IMR-90 (cell line): ENCODE measurements at regions of chr11 and their contacts with region 1.

Region 1: DNA sequence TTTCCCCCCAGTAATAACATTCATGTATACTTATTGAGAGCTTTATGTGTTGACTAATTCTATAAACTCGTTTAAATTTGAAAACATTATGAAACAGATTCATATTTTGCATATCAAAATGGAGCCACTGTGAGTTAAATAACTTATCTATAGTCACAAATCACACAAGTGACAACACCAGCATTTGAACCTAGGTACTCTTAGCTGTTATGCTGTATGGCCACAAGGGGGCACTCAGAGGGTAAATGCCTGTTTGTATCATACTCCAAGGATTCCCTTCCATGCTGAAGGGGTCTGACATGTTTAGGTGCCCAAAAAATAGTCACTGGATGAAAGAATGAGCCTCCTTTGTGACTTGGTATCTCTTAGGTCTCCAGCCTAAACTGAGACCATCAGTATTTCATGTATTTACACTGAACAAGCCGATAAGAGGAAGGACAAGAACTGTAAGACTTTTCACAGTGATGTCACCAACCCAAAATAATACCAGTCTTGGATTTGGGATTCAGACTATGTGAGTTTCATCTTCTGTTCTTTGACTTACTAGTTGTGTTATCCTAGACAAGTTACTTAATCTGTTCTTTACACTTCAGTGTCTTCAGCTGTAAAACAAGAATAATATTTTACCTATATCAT is 12.2 kb upstream of the OR52D1 start:
- DNase-seq: peak; percentile 57
- ATAC-seq: peak; percentile 95
- H3K4me3 ChIP-seq: no peak overlapping the region
- H3K27ac ChIP-seq: no peak overlapping the region
- H3K4me1 ChIP-seq: no peaks in the 10 kb centered on the region
- H3K27me3 ChIP-seq: peaks cover 4% of the 10 kb centered on the region
- CTCF ChIP-seq: peak; percentile 75
- POLR2A ChIP-seq: no peak
- RAD21 ChIP-seq: peak; percentile 77

Region 2: GRCh38 chr11:5123802-5124521 is 352.3 kb before region 1 on chr11:
- CTCF ChIA-PET with region 1: no interaction called
- POLR2A ChIA-PET with region 1: no interaction called
- dilution Hi-C with region 1: no loop called
- in situ Hi-C with region 1: no loop called
- intact Hi-C with region 1: loop called (anchors 1 kb)
- DNase-seq: peak; percentile 76
- ATAC-seq: peak; percentile 100
- H3K4me3 ChIP-seq: no peak overlapping the region
- H3K27ac ChIP-seq: no peak overlapping the region
- H3K4me1 ChIP-seq: no peaks in the 10 kb centered on the region
- H3K27me3 ChIP-seq: no peaks in the 10 kb centered on the region
- CTCF ChIP-seq: peak; percentile 94
- POLR2A ChIP-seq: no peak
- RAD21 ChIP-seq: peak; percentile 91

Region 3: DNA sequence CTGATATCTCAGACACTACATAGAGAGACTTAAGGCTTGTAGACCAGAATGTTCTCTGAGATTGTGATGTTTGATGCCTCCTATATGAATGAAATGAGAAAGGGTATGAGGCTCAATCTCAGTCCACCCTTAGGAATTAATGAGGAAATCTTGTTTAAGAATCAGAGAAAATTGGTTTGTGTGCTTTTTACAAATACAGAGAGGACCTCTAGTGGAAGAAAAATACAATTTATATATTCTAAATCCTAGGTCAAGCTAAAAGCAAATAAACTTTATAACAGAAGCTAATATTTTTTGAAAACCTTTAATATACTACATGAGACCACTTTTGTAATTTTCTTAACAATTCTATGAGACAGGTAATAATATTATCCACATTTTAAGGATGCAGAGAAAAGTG is 77.0 kb after region 1 on chr11:
- CTCF ChIA-PET with region 1: interaction called, 7 read pairs
- POLR2A ChIA-PET with region 1: no interaction called
- dilution Hi-C with region 1: no loop called
- in situ Hi-C with region 1: no loop called
- intact Hi-C with region 1: loop called (anchors 1 kb)
- DNase-seq: peak; percentile 10
- ATAC-seq: no peak; the same call in 1 of the 2 replicates
- H3K4me3 ChIP-seq: no peak overlapping the region
- H3K27ac ChIP-seq: no peak overlapping the region
- H3K4me1 ChIP-seq: no peaks in the 10 kb centered on the region
- H3K27me3 ChIP-seq: no peaks in the 10 kb centered on the region; the same call in 1 of the 2 replicates
- CTCF ChIP-seq: peak; percentile 38; the same call in 1 of the 2 replicates
- POLR2A ChIP-seq: no peak
- RAD21 ChIP-seq: peak; percentile 37

Region 4: GRCh38 chr11:5684646-5685362 is 208.5 kb after region 1 on chr11 and contains the start of gene TRIM5:
- CTCF ChIA-PET with region 1: no interaction called
- POLR2A ChIA-PET with region 1: no interaction called
- dilution Hi-C with region 1: no loop called
- in situ Hi-C with region 1: no loop called
- intact Hi-C with region 1: loop called (anchors 1 kb)
- DNase-seq: peak; percentile 99
- ATAC-seq: peak; percentile 95
- H3K4me3 ChIP-seq: peak within 1 kb of the TSS; percentile 56
- H3K27ac ChIP-seq: peak within 1 kb of the TSS; percentile 67
- H3K4me1 ChIP-seq: no peaks in the 10 kb centered on the region
- H3K27me3 ChIP-seq: no peaks in the 10 kb centered on the region
- CTCF ChIP-seq: peak; percentile 58
- POLR2A ChIP-seq: peak; percentile 95
- RAD21 ChIP-seq: peak; percentile 46
- total RNA-seq, gene TRIM5: 49.1 and 58.0 TPM in 2 replicates

Region 5: GRCh38 chr11:5712507-5712906 is 236.2 kb after region 1 on chr11:
- CTCF ChIA-PET with region 1: no interaction called
- POLR2A ChIA-PET with region 1: no interaction called
- dilution Hi-C with region 1: no loop called
- in situ Hi-C with region 1: no loop called
- intact Hi-C with region 1: loop called (anchors 5 kb)
- DNase-seq: peak; percentile 5
- ATAC-seq: no peak
- H3K4me3 ChIP-seq: no peak overlapping the region
- H3K27ac ChIP-seq: no peak overlapping the region
- H3K4me1 ChIP-seq: no peaks in the 10 kb centered on the region
- H3K27me3 ChIP-seq: no peaks in the 10 kb centered on the region
- CTCF ChIP-seq: peak; percentile 40
- POLR2A ChIP-seq: no peak
- RAD21 ChIP-seq: peak; percentile 38

Region 6: DNA sequence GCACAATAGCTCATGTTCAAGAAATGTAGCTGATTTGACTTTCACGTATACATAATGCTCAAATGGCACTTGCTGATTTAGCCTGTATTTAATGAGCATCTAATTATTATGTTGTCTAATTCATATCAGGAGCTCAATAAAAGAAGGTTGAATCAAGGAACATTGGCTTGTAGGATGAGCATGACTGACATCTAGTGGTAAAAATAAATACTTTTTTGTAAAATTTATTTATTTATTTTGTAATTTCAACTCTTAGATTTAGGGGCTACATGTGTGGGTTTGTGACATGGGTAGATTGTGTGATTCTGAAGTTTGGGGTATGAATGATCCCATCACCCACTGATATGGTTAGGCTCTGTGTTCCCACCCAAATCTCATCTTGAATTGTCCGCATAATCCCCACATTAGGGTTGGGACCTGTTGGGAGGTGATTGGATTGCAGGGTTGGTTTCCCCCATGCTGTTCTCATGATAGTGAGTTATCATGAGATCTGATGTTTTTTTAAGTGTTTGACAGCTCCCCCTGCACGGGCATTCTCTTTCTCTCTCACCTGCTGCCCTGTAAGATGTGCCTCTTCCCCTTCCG is 415.0 kb after region 1 on chr11:
- CTCF ChIA-PET with region 1: no interaction called
- POLR2A ChIA-PET with region 1: no interaction called
- dilution Hi-C with region 1: no loop called
- in situ Hi-C with region 1: no loop called
- intact Hi-C with region 1: loop called (anchors 10 kb)
- DNase-seq: peak; percentile 6
- ATAC-seq: no peak
- H3K4me3 ChIP-seq: no peak overlapping the region
- H3K27ac ChIP-seq: no peak overlapping the region
- H3K4me1 ChIP-seq: no peaks in the 10 kb centered on the region
- H3K27me3 ChIP-seq: no peaks in the 10 kb centered on the region
- CTCF ChIP-seq: peak; percentile 44
- POLR2A ChIP-seq: no peak
- RAD21 ChIP-seq: peak; percentile 33; the same call in 1 of the 2 replicates

Region 7: DNA sequence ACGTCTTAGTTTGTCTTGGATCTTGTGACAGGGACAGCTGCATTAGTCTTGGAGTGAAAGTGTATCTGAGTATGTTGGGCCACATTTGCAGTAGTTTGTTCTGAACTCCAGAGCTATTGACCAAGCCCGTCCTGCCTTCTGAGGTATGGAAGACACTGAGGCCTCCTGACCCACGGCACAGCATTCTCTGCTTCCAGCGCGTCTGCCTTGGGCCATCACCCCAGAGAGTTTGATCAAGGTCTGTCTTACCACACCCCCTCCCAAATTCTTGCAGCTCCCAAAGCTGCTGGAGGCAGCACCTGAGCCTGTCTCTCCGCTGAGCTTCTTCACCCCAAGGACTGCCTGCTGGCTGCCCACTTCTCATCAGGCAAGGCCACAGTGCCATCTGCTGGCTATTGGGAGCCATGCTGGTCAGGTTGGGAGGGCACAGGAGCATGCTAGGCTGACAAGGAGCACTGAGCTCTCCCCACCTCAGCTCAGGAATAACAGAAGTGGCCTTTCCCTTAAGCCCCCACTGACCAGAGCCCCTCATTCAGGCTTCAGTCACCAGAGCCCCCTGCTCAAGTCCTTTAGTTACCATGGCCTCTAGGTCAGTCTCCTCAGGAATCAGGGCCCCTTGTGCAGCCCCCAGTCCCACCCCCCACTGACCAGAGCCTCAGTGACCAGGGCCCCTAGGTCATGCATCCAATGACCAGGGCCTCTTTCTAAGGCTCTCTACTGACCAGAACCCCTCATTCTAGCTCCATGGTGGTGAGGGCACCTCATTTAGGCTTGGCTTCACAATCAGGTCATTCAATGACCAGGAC is 886.8 kb after region 1 on chr11:
- CTCF ChIA-PET with region 1: no interaction called
- POLR2A ChIA-PET with region 1: no interaction called
- dilution Hi-C with region 1: no loop called
- in situ Hi-C with region 1: no loop called
- intact Hi-C with region 1: loop called (anchors 5 kb)
- DNase-seq: peak; percentile 77
- ATAC-seq: peak; percentile 99
- H3K4me3 ChIP-seq: no peak overlapping the region
- H3K27ac ChIP-seq: no peak overlapping the region
- H3K4me1 ChIP-seq: 0 out of 2 replicates have a peak, but pooled peaks cover 2% of the 10 kb centered on the region
- H3K27me3 ChIP-seq: peaks cover 3% of the 10 kb centered on the region
- CTCF ChIP-seq: peak; percentile 96
- POLR2A ChIP-seq: no peak
- RAD21 ChIP-seq: peak; percentile 93